WTC11 (cell line): ENCODE measurements at regions of chr16 and their contacts with region 1.

Region 1: GRCh38 chr16:84738255-84739038 is 38.6 kb downstream of the USP10 start:
- DNase-seq: peak; percentile 82
- ATAC-seq: peak; percentile 70
- H3K4me3 Mint-ChIP-seq: no peak overlapping the region
- H3K27ac Mint-ChIP-seq: 0 out of 2 replicates have a peak overlapping the region, but pooled peaks have one; percentile 89
- H3K4me1 Mint-ChIP-seq: peaks cover 88% of the 10 kb centered on the region
- H3K27me3 Mint-ChIP-seq: no peaks in the 10 kb centered on the region
- CTCF ChIP-seq: peak; percentile 97

Region 2: GRCh38 chr16:84647828-84648594 is 90.4 kb before region 1 on chr16 and contains the start of gene KLHL36:
- CTCF ChIA-PET with region 1: interaction called, 13 read pairs
- POLR2A ChIA-PET with region 1: no interaction called
- DNase-seq: no peak
- ATAC-seq: peak; percentile 84
- H3K4me3 Mint-ChIP-seq: peak within 1 kb of the TSS; percentile 81
- H3K27ac Mint-ChIP-seq: 0 out of 2 replicates have a peak within 1 kb of the TSS, but pooled peaks have one; percentile 29
- H3K4me1 Mint-ChIP-seq: peaks cover 21% of the 10 kb centered on the region
- H3K27me3 Mint-ChIP-seq: peaks cover 19% of the 10 kb centered on the region
- CTCF ChIP-seq: no peak
- total RNA-seq, gene KLHL36: 55.7 to 56.1 TPM (median 55.8 TPM) in 3 replicates

Region 3: GRCh38 chr16:84714028-84714427 is 24.4 kb before region 1 on chr16:
- CTCF ChIA-PET with region 1: interaction called, 42 read pairs
- POLR2A ChIA-PET with region 1: no interaction called
- DNase-seq: no peak
- ATAC-seq: peak; percentile 41
- H3K4me3 Mint-ChIP-seq: no peak overlapping the region
- H3K27ac Mint-ChIP-seq: peak overlapping the region; percentile 44
- H3K4me1 Mint-ChIP-seq: peaks cover 77% of the 10 kb centered on the region
- H3K27me3 Mint-ChIP-seq: no peaks in the 10 kb centered on the region
- CTCF ChIP-seq: no peak

Region 4: DNA sequence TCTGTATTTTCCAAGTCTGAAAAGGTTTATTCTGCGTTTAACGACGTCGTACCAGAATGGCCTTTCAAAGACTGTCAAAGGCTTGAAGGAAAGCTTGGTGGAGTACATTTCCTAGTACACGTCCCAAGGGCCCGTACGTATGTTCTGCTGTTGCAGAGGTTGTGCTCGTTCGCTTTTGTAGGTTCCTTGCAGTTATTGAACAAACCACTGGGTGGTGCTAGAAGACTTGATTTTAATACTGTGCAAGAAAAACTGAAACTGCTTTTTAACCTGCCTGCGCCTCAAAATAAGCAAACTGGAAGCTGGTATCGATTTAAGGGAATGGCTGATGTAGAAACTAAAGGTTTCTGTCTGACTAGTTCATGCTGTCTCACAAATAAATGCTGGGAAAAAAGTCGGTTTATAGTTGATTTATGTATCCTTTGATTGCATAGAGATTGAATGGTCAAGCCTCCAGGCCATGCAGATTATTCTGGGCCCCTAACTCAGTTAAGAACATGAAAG is 16.0 kb after region 1 on chr16:
- CTCF ChIA-PET with region 1: interaction called, 31 read pairs
- POLR2A ChIA-PET with region 1: no interaction called
- DNase-seq: peak; percentile 65
- ATAC-seq: peak; percentile 88
- H3K4me3 Mint-ChIP-seq: no peak overlapping the region
- H3K27ac Mint-ChIP-seq: 0 out of 2 replicates have a peak overlapping the region, but pooled peaks have one; percentile 48
- H3K4me1 Mint-ChIP-seq: peaks cover 47% of the 10 kb centered on the region
- H3K27me3 Mint-ChIP-seq: no peaks in the 10 kb centered on the region
- CTCF ChIP-seq: peak; percentile 63

Region 5: DNA sequence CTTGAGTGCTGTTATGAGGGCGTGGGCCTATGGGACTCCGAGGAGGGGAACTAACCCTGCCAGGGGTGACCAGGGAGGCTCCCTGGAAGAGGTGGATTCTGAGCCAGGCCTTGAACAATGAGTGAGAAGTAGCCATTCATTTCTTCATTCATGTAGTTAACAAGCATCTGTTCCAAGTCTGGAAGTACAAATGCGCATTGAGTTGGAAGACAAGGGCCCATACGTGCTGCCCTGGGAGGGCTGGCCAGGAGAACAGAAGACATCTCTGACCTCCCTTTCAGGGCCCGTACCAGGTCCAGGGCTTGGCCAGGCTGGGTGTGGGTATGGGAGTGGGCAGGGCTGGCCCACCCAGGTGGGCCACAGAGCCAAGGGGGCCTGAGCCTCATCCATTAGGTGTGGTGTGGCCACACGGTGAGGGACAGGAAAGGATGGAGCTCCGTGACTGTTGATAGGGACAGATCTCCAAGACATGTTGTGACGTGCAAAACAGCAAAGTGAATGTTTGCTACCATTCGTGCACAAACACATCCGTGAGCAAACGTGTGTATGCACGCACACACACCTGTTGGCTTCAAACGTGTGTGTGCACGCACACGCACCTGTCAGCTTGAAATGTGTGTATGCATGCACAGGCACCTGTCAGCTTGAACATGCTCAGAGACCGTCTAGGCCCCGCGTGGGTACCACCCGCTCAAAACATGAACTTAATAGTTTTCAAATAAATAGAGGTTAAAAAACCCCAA is 226.1 kb after region 1 on chr16:
- CTCF ChIA-PET with region 1: interaction called, 10 read pairs
- POLR2A ChIA-PET with region 1: no interaction called
- DNase-seq: no peak
- ATAC-seq: no peak
- H3K4me3 Mint-ChIP-seq: no peak overlapping the region
- H3K27ac Mint-ChIP-seq: no peak overlapping the region
- H3K4me1 Mint-ChIP-seq: peaks cover 8% of the 10 kb centered on the region
- H3K27me3 Mint-ChIP-seq: no peaks in the 10 kb centered on the region
- CTCF ChIP-seq: no peak